GM13977 (cell line): ENCODE measurements at regions of chr10 and their contacts with region 1.

Region 1: DNA sequence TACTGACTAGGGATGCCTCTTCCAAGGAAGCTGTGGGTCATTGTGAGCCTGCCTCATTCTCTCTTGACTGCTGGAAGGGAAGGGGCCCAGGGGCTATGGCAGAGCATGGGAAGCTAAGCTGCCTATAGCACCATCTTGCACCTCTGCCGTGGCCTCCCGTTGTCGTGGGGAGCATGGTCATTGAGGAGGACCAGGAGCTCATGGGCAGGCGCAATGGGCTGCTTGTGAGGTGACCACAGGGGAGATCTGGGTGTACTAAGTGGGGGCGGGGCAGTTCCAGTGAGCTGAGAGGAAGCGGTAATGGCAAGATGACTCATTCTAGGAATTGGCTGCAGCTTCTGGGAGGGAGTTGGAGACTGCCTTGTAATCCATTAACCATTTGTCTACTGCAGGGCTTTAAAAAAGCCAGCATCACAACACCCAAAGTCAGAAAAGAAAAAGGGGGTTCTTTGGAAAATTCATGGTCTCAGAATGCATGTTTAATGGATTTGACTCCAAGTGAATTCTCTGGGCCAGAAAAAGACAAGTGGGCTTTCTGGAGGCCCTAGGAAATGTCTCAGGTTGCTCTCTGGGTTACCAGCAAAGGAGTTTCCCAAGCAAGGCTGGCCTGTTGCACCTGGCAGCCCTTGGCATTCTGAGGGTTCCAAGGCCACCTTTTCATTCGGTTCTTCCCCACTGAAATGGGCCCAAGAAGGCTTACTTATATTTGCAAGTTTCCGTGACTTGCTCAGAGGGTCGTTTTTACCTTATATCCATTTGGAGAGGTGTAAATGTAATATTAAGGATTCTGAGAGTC is 3.6 kb downstream of the DUSP5 start:
- DNase-seq: peak; percentile 65
- CTCF ChIP-seq: no peak

Region 2: GRCh38 chr10:110414563-110415309 is 86.6 kb before region 1 on chr10:
- in situ Hi-C with region 1: loop called (anchors 5 kb)
- DNase-seq: peak; percentile 77
- CTCF ChIP-seq: no peak